Mammary epithelial cell (primary cell): ENCODE measurements at regions of chr13 and their contacts with region 1.

Region 1: GRCh38 chr13:41145146-41145908 is 12.7 kb upstream of the KBTBD6 start:
- DNase-seq: peak; percentile 84
- H3K4me3 ChIP-seq: no peak overlapping the region
- H3K27ac ChIP-seq: peak overlapping the region; percentile 73
- H3K4me1 ChIP-seq: peaks cover 19% of the 10 kb centered on the region
- H3K27me3 ChIP-seq: no peaks in the 10 kb centered on the region
- CTCF ChIP-seq: no peak

Region 2: DNA sequence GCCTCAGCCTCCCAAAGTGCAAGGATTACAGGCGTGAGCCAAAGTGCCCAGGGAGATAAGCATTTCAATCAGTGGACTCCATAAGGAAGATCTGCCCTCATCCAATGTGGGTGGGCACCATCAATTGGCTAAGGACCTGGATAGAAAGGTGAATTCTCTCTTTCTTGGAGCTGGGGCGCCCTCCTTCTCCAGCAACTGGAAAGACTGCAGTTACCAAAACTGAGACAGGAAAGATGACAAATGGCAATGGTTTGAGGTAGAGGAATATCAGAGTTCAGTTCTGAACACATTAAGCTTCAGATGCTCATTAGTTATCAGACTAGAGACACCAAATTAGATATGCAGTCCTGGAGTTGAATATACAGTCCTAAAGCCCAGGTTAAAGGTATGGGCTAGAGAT is 115.7 kb before region 1 on chr13:
- CTCF ChIA-PET with region 1: no interaction called
- dilution Hi-C with region 1: no loop called
- in situ Hi-C with region 1: no loop called
- intact Hi-C with region 1: no loop called
- DNase-seq: no peak
- H3K4me3 ChIP-seq: no peak overlapping the region
- H3K27ac ChIP-seq: no peak overlapping the region
- H3K4me1 ChIP-seq: no peaks in the 10 kb centered on the region
- H3K27me3 ChIP-seq: no peaks in the 10 kb centered on the region
- CTCF ChIP-seq: peak; percentile 17 to 20

Region 3: GRCh38 chr13:41188584-41188983 is 43.3 kb after region 1 on chr13:
- CTCF ChIA-PET with region 1: no interaction called
- dilution Hi-C with region 1: loop called (anchors 5 kb)
- in situ Hi-C with region 1: no loop called
- intact Hi-C with region 1: no loop called
- DNase-seq: no peak
- H3K4me3 ChIP-seq: no peak overlapping the region
- H3K27ac ChIP-seq: no peak overlapping the region
- H3K4me1 ChIP-seq: peaks cover 3% of the 10 kb centered on the region
- H3K27me3 ChIP-seq: no peaks in the 10 kb centered on the region
- CTCF ChIP-seq: no peak

Region 4: DNA sequence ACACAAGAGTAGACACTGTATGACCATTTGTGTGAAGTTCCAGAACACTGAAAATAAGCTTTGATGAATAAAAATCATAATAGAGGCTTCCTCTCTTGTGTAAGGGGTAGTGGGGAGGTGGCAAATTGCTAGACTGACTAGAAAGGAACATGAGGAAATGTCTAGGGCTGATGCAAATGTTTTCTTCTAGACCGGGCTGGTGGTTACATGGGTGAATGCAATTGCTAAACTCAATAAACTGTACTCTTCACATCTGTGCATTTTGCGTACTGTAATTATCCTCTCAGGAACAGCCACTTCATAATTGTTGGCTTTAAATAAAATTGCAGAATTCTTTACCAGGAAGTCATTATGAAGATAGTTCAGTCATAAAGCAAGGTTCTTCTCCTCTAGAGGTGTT is 54.2 kb after region 1 on chr13:
- CTCF ChIA-PET with region 1: no interaction called
- dilution Hi-C with region 1: no loop called
- in situ Hi-C with region 1: no loop called
- intact Hi-C with region 1: no loop called
- DNase-seq: no peak
- H3K4me3 ChIP-seq: no peak overlapping the region
- H3K27ac ChIP-seq: no peak overlapping the region
- H3K4me1 ChIP-seq: no peaks in the 10 kb centered on the region
- H3K27me3 ChIP-seq: no peaks in the 10 kb centered on the region
- CTCF ChIP-seq: no peak

Region 5: GRCh38 chr13:41327994-41328790 is 182.9 kb after region 1 on chr13:
- CTCF ChIA-PET with region 1: no interaction called
- dilution Hi-C with region 1: no loop called
- in situ Hi-C with region 1: no loop called
- intact Hi-C with region 1: no loop called
- DNase-seq: no peak
- H3K4me3 ChIP-seq: no peak overlapping the region
- H3K27ac ChIP-seq: no peak overlapping the region
- H3K4me1 ChIP-seq: no peaks in the 10 kb centered on the region
- H3K27me3 ChIP-seq: no peaks in the 10 kb centered on the region
- CTCF ChIP-seq: no peak